ENCODE measurements at regions of chr13 and their contacts with region 1.

Region 1: DNA sequence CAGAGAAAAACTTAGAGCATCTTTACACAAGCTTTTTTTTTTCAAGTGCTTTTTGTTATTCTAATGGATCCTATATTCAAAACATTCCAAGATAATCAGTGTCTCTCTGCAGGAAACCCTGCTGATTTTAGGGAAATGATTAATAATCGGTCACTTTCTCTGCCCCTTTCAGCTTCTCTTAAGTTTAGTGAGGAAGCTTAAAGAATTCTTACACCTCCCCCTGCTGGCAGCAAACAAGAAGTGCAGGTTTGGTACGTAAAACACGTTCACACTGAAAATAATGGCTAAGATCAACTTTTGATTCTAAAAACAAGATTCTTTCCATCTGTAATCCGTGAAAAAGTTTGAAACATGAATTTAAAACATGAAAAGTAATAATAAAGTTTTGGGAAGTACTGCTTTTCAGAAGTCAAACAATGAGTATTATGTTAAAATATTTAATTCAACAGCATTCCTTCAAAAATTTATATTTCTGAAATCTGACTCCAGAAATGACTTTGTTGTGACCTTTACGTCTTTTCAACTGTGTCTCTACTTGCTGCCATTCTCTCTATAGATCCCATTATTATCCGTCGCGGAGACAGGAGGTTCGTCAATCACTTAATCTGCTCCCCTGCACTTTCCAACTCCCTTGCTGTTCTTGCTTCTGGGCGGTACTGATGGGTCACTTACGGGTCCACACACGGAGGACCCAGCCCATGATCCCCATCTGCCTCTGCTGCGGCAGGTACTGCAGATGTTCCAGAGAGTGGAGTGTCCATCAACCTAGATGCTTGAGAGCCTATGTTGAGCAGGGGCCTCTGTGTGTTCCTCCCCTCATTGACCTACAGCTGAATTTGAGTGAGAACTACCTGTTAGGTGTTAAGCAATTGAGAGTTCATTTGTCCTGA is 203.1 kb upstream of the EDNRB start:
- DNase-seq: peak; percentile 27
- ATAC-seq: peak; percentile 68
- H3K4me3 Mint-ChIP-seq: no peak overlapping the region
- H3K27ac Mint-ChIP-seq: no peak overlapping the region
- H3K4me1 Mint-ChIP-seq: peaks cover 41% of the 10 kb centered on the region
- H3K27me3 Mint-ChIP-seq: no peaks in the 10 kb centered on the region
- CTCF ChIP-seq: peak; percentile 79

Region 2: GRCh38 chr13:77779552-77780272 is 342.0 kb before region 1 on chr13:
- CTCF ChIA-PET with region 1: interaction called, 17 read pairs
- POLR2A ChIA-PET with region 1: no interaction called
- DNase-seq: no peak
- ATAC-seq: peak; percentile 55
- H3K4me3 Mint-ChIP-seq: no peak overlapping the region
- H3K27ac Mint-ChIP-seq: peak overlapping the region; percentile 16
- H3K4me1 Mint-ChIP-seq: peaks cover 39% of the 10 kb centered on the region
- H3K27me3 Mint-ChIP-seq: no peaks in the 10 kb centered on the region
- CTCF ChIP-seq: peak; percentile 54

Region 3: DNA sequence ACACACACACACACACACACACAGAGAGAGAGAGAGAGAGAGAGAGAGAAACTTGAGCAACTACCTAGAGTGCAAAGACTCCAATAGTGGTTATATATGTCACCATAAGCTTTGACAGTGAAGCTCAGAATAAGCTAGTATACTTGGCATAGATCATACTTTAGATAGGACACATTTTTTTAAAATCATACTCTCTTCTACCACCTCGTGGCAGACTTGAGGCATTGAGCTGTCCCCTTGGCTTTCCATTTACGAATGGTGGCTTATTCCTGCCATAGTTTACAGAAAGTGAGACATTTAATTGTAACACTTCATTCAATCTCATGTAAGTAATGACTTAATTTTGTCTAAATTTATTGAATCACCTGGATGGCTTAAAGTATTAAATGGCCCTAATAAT is 311.3 kb before region 1 on chr13:
- CTCF ChIA-PET with region 1: interaction called, 28 read pairs
- POLR2A ChIA-PET with region 1: no interaction called
- DNase-seq: no peak
- ATAC-seq: peak; percentile 91
- H3K4me3 Mint-ChIP-seq: no peak overlapping the region
- H3K27ac Mint-ChIP-seq: no peak overlapping the region
- H3K4me1 Mint-ChIP-seq: peaks cover 7% of the 10 kb centered on the region
- H3K27me3 Mint-ChIP-seq: no peaks in the 10 kb centered on the region
- CTCF ChIP-seq: no peak

Region 4: GRCh38 chr13:77918391-77919245 is 203.1 kb before region 1 on chr13 and contains the start of gene EDNRB:
- CTCF ChIA-PET with region 1: interaction called, 24 read pairs
- POLR2A ChIA-PET with region 1: interaction called, 3 read pairs
- DNase-seq: peak; percentile 65
- ATAC-seq: peak; percentile 64
- H3K4me3 Mint-ChIP-seq: no peak within 1 kb of the TSS
- H3K27ac Mint-ChIP-seq: peak within 1 kb of the TSS; percentile 48; the same call in 1 of the 2 replicates
- H3K4me1 Mint-ChIP-seq: peaks cover 56% of the 10 kb centered on the region
- H3K27me3 Mint-ChIP-seq: peaks cover 3% of the 10 kb centered on the region; the same call in 1 of the 2 replicates
- CTCF ChIP-seq: no peak
- total RNA-seq, gene EDNRB: 55.8 to 142 TPM (median 142 TPM) in 3 replicates

Region 5: GRCh38 chr13:78437781-78438180 is 316.1 kb after region 1 on chr13:
- CTCF ChIA-PET with region 1: no interaction called
- POLR2A ChIA-PET with region 1: no interaction called
- DNase-seq: no peak
- ATAC-seq: no peak
- H3K4me3 Mint-ChIP-seq: no peak overlapping the region
- H3K27ac Mint-ChIP-seq: no peak overlapping the region
- H3K4me1 Mint-ChIP-seq: peaks cover 8% of the 10 kb centered on the region
- H3K27me3 Mint-ChIP-seq: no peaks in the 10 kb centered on the region
- CTCF ChIP-seq: no peak

Region 6: DNA sequence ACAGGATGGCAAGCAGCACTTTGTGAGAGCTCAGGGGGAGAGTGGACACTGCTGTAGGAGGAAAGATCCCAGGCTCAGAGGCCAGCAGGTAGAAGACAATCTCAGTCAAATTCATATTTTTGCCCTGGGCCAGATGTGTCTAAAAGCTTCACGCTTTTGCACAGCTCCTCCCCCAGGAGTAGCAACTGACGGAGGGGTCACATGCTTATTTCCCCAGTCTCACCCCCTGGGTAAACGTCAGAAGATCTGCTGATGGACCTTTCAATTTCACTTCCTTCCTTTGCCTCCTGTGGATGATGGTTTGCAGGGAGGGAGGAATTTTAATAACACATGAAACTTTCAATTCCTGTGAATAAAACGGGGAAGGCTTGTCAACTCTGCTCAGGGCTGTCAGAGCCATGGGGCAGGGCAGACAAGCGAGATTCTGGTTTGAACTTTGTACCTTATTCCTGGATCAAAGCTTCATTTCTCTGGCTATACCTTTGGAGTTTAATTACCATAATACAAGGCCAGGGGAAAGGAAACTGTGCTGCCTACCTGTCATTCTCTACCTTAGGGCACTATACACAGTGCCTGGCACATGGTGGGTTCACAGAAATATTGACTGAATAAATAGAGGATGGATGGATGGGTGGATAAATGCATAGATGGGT is 440.7 kb after region 1 on chr13:
- CTCF ChIA-PET with region 1: no interaction called
- POLR2A ChIA-PET with region 1: no interaction called
- DNase-seq: no peak
- ATAC-seq: no peak
- H3K4me3 Mint-ChIP-seq: no peak overlapping the region
- H3K27ac Mint-ChIP-seq: no peak overlapping the region
- H3K4me1 Mint-ChIP-seq: no peaks in the 10 kb centered on the region
- H3K27me3 Mint-ChIP-seq: no peaks in the 10 kb centered on the region; the same call in 1 of the 2 replicates
- CTCF ChIP-seq: no peak

Measured in WTC11 (cell line).